GM12878 (cell line): ENCODE measurements at regions of chr2 and their contacts with region 1.

Region 1: DNA sequence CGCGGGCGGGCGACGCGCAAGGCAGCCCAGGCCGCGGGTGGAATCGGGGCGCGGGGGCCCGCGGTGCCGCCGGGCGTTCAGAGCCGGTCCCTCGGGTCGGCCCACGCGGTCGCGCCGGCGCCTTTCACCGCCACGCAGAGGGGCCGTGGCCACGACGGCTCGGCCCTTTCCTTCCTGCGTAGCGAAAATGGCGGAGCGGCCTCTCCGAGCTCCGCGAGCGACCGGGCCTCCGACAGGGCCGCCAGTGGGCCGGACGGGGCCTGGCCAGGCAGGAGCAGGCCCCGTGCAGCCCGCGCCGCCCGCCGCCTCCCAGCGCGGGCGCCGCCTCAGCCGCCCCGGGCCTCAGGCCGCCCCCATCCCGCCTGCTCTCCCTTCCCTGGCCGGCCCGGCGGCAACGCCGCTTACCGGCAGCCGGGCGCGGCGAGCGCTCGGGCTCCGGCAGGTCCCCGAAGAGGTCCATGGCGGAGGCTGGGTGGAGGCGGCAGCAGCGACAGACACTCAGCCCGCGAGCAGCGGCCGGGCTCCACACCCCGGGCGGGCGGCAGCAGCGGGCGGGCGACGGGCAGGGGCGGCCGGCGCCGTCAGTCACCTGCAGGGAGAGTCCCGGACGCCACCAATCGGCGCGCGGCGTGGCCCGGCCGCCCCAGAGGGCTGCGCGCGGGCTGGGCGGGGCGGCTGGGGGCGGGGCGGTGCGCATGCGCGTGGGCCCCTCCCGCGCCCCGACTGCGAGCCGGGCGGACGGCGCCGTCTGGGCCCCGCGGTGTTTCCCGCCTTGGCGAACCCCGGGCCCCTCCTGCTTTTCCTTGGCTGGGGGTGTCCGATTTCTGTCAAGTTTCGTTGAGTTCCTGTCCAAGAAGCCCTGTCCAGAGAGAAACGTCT is at the start of gene ILKAP:
- DNase-seq: no peak
- ATAC-seq: peak; percentile 95
- H3K4me3 ChIP-seq: peak within 1 kb of the TSS; percentile 79
- H3K27ac ChIP-seq: peak within 1 kb of the TSS; percentile 76
- H3K4me1 ChIP-seq: peaks cover 12% of the 10 kb centered on the region
- H3K27me3 ChIP-seq: no peaks in the 10 kb centered on the region
- CTCF ChIP-seq: no peak
- EP300 ChIP-seq: no peak
- POLR2A ChIP-seq: peak; percentile 91
- RAD21 ChIP-seq: no peak
- polyA plus RNA-seq, gene ILKAP: 4.2 to 11.2 TPM

Region 2: DNA sequence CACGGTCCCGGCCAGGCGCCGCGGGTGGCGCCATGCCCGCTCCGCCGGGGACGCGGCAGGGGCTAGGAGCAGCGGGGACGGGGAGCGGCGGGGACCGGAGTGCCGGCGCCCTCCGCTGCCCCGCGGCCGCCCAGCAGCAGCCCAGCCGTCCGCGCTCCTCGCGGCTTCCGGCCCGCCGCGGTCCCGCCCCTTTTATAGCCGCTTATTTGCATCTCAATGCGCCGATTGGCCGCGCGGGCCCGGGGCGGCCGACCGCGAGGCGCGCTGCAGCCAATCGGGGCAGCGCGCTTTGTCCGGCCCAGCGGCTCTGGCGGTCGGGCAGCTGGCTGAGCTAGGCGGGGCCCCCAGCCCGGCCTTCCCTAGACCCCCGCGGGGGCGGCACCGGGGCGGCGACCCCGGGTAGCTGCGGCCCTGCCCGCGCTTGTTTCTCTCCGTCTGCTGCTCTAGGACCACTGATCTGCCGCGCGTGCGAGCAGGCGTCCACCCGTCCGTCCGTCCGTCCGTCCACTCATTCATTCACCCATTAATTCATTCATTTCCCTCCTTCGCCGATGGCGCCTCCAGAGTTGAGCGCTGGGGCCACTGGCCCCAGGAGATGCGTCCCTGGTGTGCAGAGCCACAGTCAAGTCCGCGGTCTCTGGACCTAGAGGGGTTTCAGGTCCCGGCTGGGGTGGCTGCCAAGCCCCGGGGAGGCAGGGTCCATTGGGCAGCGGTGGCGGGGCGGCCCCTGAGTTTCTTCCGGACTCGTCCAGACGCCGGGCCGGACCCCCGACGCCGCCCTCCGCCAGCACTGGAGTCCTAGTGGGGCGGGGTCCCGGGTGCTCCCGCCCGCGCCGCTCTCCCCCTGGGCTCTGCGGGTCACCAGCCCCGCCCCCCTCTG is 36.8 kb after region 1 on chr2 and contains the start of gene HES6:
- CTCF ChIA-PET with region 1: no interaction called
- POLR2A ChIA-PET with region 1: interaction called, 6 read pairs
- RAD21 ChIA-PET with region 1: no interaction called
- SMC1A ChIA-PET with region 1: no interaction called
- in situ Hi-C with region 1: no loop called
- intact Hi-C with region 1: loop called (anchors 5 kb)
- DNase-seq: no peak
- ATAC-seq: peak; percentile 94
- H3K4me3 ChIP-seq: peak within 1 kb of the TSS; percentile 72
- H3K27ac ChIP-seq: no peak within 1 kb of the TSS
- H3K4me1 ChIP-seq: 0 out of 2 replicates have a peak, but pooled peaks cover 3% of the 10 kb centered on the region
- H3K27me3 ChIP-seq: peaks cover 0 to 8% of the 10 kb centered on the region in 2 experiments; a peak in 3 of 4 replicates
- CTCF ChIP-seq: 0 out of 6 replicates have a peak, but pooled peaks of 1 of the 3 experiments have one; percentile 11
- EP300 ChIP-seq: no peak
- POLR2A ChIP-seq: peak; percentile 84
- RAD21 ChIP-seq: no peak
- polyA plus RNA-seq, gene HES6: 0.11 to 0.15 TPM

Region 3: DNA sequence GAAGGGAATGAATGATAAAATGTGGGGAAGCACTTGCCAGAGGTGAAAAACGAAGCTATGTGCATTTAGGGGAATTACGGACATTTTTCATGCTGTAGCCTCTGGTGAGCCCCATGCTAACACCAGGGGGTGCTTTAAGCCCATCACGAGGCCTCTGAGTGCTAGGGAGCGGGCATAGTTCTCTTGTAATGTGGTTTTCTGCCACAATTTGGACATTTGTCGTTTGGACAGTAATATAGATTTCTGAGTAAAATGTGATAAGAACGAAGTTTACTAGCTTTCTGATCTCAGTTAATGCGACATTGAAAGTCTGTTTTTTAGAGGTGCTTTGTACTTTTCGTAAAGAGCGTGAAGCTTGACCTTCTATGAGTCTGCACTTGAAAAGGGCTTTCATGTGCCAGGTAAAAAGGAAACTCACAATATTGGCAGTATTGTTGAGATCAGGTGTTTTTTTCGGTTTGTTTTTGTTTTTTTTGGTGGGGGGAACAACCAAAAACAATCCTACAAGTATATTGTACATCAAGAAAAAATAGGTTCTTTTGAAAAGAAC is 167.6 kb after region 1 on chr2:
- CTCF ChIA-PET with region 1: no interaction called
- POLR2A ChIA-PET with region 1: no interaction called
- RAD21 ChIA-PET with region 1: no interaction called
- SMC1A ChIA-PET with region 1: no interaction called
- in situ Hi-C with region 1: no loop called
- intact Hi-C with region 1: no loop called
- DNase-seq: no peak
- ATAC-seq: peak; percentile 91
- H3K4me3 ChIP-seq: no peak overlapping the region
- H3K27ac ChIP-seq: no peak overlapping the region
- H3K4me1 ChIP-seq: no peaks in the 10 kb centered on the region
- H3K27me3 ChIP-seq: no peaks in the 10 kb centered on the region
- CTCF ChIP-seq: peak; percentile 57 to 69 (median 58); a peak in 5 of 6 replicates
- EP300 ChIP-seq: no peak
- POLR2A ChIP-seq: no peak
- RAD21 ChIP-seq: peak; percentile 73